PC-9 (cell line): ENCODE measurements at regions of chr2 and their contacts with region 1.

Region 1: GRCh38 chr2:200483729-200484198 is 26.1 kb downstream of the KCTD18 start:
- DNase-seq: peak; percentile 59 to 66
- H3K4me3 ChIP-seq: no peak overlapping the region
- H3K27ac ChIP-seq: no peak overlapping the region
- H3K4me1 ChIP-seq: peaks cover 43% of the 10 kb centered on the region
- H3K27me3 ChIP-seq: no peaks in the 10 kb centered on the region
- CTCF ChIP-seq: peak; percentile 58

Region 2: GRCh38 chr2:200618587-200619021 is 134.8 kb after region 1 on chr2:
- CTCF ChIA-PET with region 1: interaction called, 29 read pairs
- POLR2A ChIA-PET with region 1: no interaction called
- intact Hi-C with region 1: no loop called
- DNase-seq: peak in 1 of 2 experiments; percentile 14
- H3K4me3 ChIP-seq: no peak overlapping the region
- H3K27ac ChIP-seq: no peak overlapping the region
- H3K4me1 ChIP-seq: peaks cover 25% of the 10 kb centered on the region
- H3K27me3 ChIP-seq: no peaks in the 10 kb centered on the region
- CTCF ChIP-seq: peak; percentile 30; the same call in 1 of the 2 replicates